Astrocyte of the cerebellum (primary cell): ENCODE measurements at regions of chr13 and their contacts with region 1.

Region 1: GRCh38 chr13:27619728-27620376 is 477 bp downstream of the LNX2 start:
- DNase-seq: no peak
- H3K4me3 ChIP-seq: peak overlapping the region; percentile 85
- CTCF ChIP-seq: peak; percentile 20

Region 2: DNA sequence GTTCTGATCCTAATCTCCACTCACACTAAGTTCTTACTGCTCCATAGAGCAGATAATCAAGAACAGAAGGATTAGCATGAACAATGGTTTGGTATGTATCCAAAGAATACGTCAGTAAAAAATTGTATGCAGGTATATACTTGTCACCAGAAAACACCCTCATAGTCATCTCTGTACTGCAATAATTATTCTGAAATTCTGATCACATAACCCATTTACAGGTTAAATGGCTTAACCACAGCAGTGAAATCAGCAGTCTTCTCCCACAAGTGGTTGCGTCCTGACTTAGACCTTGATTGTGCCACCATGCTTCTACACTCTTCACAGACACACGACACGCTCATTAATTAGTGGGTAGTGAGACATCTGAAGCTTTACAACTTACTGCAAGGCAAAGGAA is 50.4 kb before region 1 on chr13:
- in situ Hi-C with region 1: loop called (anchors 5 kb)
- DNase-seq: no peak
- H3K4me3 ChIP-seq: no peak overlapping the region
- CTCF ChIP-seq: no peak